Common myeloid progenitor, CD34-positive (primary cell): ENCODE measurements at regions of chr2 and their contacts with region 1.

Region 1: DNA sequence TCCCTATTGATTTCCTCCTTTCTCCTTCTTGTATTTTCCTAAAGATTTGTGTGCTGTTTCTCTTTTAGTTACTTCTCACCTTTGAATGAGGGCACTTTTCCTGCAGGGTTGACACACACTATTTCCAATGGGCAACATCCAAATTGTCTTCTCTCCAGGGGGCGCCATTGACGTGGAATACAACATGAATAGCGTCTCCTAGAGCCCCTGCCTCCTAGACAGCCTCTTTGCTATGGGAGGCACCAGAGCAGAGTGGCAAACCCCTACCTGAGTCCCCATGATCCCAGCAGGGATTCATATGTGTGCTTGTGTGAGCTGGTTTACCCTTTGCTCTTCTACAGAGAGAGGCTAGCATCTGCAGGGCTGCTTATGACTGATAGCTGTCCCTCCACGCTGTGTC is 61.3 kb upstream of the ITSN2 start:
- DNase-seq: peak; percentile 66 to 75 (median 70)
- H3K4me3 ChIP-seq: no peak overlapping the region
- H3K27ac ChIP-seq: no peak overlapping the region
- H3K4me1 ChIP-seq: no peaks in the 10 kb centered on the region
- H3K27me3 ChIP-seq: no peaks in the 10 kb centered on the region

Region 2: DNA sequence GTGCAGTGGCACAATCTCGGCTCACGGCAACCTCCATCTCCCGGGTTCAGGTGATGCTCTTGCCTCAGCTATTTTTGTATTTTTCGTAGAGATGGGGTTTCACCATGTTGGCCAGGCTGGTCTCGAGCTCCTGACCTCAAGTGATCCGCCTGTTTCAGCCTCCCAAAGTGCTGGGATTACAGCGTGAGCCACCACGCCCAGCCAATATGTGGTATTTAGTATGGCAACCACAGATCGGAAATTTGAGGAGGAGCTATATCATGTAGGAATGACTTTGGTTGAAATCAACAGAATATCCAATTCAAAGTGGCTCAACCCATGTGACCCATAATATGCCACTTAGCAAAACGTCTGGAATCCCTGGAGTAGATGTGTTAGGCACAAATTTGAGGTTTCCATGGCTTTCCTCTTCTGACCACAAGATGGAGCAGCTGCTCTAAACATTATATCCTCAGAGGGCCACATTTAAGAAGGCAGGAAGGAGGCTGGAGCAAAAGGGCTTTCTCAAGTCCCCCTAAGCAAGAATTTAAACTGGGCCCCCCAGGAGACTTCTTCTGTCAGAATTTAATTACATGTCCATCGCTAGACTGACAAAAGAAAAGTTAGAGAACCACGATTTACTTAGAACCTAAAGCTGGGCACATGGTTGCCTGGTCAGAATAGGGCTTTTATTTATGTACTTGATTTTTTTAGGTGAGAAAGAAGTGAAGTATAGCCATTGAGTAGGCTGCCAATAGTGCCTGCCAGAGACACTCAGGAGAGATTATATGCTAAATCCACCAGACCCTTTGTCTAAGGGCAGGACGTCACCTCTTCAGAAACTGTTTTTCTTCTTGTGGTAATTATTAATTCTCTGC is 11.7 kb before region 1 on chr2:
- CTCF ChIA-PET with region 1: interaction called, 13 read pairs
- POLR2A ChIA-PET with region 1: no interaction called
- DNase-seq: peak; percentile 60 to 78 (median 71)
- H3K4me3 ChIP-seq: no peak overlapping the region
- H3K27ac ChIP-seq: no peak overlapping the region
- H3K4me1 ChIP-seq: no peaks in the 10 kb centered on the region
- H3K27me3 ChIP-seq: no peaks in the 10 kb centered on the region

Region 3: DNA sequence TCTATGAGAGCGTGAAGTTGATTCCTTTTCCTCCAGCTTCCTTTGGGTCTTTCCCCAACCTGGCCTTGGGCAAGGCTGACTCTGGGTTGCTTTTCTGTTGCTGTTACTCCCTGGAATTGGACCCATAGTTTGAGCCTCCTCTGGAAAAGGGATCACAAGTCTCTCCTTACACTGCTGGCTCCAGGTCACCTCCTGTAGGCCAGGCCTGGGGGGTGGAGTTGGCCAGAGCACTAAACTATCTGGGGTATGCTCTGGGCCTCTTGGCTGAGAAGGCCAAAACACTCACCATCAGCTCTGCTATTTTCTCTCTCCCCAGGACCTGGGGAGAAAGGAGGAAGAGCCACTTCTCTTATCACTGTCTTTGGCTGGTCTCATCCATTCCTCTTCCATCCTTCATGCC is 12.9 kb after region 1 on chr2:
- CTCF ChIA-PET with region 1: interaction called, 14 read pairs
- POLR2A ChIA-PET with region 1: no interaction called
- DNase-seq: no peak
- H3K4me3 ChIP-seq: no peak overlapping the region
- H3K27ac ChIP-seq: no peak overlapping the region
- H3K4me1 ChIP-seq: peaks cover 0 to 5% (median 2%) of the 10 kb centered on the region in 4 experiments
- H3K27me3 ChIP-seq: no peaks in the 10 kb centered on the region

Region 4: GRCh38 chr2:24827321-24828237 is 405.9 kb after region 1 on chr2:
- CTCF ChIA-PET with region 1: interaction called, 62 read pairs
- POLR2A ChIA-PET with region 1: no interaction called
- DNase-seq: peak; percentile 79 to 89 (median 82)
- H3K4me3 ChIP-seq: no peak overlapping the region
- H3K27ac ChIP-seq: no peak overlapping the region
- H3K4me1 ChIP-seq: peaks cover 0 to 6% (median under 1%) of the 10 kb centered on the region in 4 experiments
- H3K27me3 ChIP-seq: no peaks in the 10 kb centered on the region